Astrocyte of the cerebellum (primary cell): ENCODE measurements at regions of chr18 and their contacts with region 1.

Region 1: GRCh38 chr18:22563098-22563707 is 145.5 kb upstream of the CTAGE1 start:
- DNase-seq: peak; percentile 84
- H3K4me3 ChIP-seq: no peak overlapping the region
- CTCF ChIP-seq: peak; percentile 69

Region 2: DNA sequence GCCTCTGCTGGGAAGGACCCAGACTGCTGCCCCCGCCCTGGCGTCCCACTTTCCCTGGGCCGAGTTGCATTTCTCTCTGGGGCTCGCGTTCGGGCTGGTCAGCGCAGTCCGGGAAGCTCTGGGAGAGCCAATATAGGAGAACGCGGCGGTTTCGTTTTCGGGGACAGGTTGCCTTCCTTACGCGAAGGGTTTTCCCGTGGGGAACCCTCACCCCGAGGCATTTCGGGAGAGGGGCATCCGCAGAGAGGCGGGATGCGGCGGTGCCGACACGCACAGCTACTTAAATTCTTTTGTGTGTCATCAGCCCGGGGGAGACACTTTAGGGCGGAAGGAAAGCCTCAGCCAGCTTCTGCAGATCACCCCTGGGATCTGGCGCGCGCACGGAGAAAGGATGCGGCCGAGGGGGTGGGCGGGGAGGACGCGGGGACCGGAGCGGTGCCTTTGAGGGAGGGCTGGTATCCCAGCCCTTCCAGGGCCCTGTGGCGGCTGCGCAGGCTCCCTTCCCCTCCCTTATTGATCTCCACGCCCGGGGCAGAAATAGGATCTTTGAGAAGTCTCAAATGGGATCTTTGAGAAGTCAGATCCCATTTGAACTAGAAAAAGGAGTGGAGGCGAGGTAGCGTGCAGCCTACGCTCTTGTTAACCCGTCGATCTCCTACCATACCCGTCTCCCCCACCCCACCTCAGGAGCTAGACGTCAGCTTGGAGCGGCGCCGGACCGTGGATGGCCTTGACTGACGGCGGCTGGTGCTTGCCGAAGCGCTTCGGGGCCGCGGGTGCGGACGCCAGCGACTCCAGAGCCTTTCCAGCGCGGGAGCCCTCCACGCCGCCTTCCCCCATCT is 392.6 kb before region 1 on chr18:
- in situ Hi-C with region 1: loop called (anchors 5 kb)
- DNase-seq: no peak
- H3K4me3 ChIP-seq: peak overlapping the region; percentile 80
- CTCF ChIP-seq: no peak

Region 3: GRCh38 chr18:22324191-22325131 is 238.7 kb before region 1 on chr18:
- in situ Hi-C with region 1: loop called (anchors 10 kb)
- DNase-seq: no peak
- H3K4me3 ChIP-seq: peak overlapping the region; percentile 12
- CTCF ChIP-seq: peak; percentile 47

Region 4: GRCh38 chr18:22694954-22695353 is 131.8 kb after region 1 on chr18:
- in situ Hi-C with region 1: no loop called
- DNase-seq: peak; percentile 78
- H3K4me3 ChIP-seq: no peak overlapping the region
- CTCF ChIP-seq: no peak